ENCODE measurements at regions of chr12 and their contacts with region 1.

Region 1: DNA sequence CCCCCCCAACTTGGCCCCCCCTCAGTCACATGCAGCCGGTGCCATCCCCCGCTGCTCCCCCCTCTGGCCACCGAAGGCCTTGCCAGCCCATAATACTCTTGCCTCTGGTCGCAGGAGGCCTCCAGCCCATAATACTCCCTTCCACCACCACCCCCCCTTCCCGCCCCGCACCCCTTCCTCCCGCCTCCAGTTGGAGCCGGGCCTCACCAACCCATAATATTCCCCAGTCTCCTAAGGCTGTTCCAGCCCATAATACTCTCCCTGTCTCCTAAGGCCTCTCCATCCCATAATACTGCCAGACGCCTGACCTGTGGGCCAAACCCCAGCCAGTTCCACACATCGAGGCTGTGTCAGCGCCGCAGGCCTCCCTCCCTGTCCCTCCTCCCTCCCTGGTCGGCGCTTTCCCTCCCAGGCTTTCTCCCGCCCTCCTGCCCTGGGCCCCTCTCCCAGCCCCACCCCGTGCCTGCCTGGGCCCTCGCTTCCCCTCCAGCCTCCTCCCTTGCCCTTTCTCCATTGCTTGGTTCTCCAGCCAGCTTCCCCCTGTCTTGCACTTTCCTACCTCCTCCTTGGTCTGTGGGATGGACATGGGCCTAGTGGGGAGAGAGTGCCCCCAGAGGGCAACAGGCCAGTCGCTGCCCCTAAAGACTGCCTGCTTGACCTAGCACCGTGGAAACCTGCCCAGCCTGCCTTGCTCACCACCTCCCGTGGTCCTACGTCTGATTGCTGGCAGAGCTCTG is 6.8 kb upstream of the CHD4 start:
- H3K4me3 Mint-ChIP-seq: peak overlapping the region; percentile 62
- H3K27ac Mint-ChIP-seq: peak overlapping the region; percentile 85
- H3K4me1 Mint-ChIP-seq: peaks cover 66% of the 10 kb centered on the region
- H3K27me3 Mint-ChIP-seq: no peaks in the 10 kb centered on the region

Region 2: GRCh38 chr12:6647083-6647604 is 33.2 kb after region 1 on chr12 and contains the start of gene ACRBP:
- intact Hi-C with region 1: loop called (anchors 2 kb)
- H3K4me3 Mint-ChIP-seq: peak within 1 kb of the TSS; percentile 93
- H3K27ac Mint-ChIP-seq: peak within 1 kb of the TSS; percentile 98
- H3K4me1 Mint-ChIP-seq: peaks cover 52% of the 10 kb centered on the region
- H3K27me3 Mint-ChIP-seq: no peaks in the 10 kb centered on the region

Region 3: GRCh38 chr12:6667627-6668100 is 53.7 kb after region 1 on chr12:
- intact Hi-C with region 1: no loop called
- H3K4me3 Mint-ChIP-seq: no peak overlapping the region
- H3K27ac Mint-ChIP-seq: peak overlapping the region; percentile 58
- H3K4me1 Mint-ChIP-seq: peaks cover 8% of the 10 kb centered on the region
- H3K27me3 Mint-ChIP-seq: no peaks in the 10 kb centered on the region

Region 4: DNA sequence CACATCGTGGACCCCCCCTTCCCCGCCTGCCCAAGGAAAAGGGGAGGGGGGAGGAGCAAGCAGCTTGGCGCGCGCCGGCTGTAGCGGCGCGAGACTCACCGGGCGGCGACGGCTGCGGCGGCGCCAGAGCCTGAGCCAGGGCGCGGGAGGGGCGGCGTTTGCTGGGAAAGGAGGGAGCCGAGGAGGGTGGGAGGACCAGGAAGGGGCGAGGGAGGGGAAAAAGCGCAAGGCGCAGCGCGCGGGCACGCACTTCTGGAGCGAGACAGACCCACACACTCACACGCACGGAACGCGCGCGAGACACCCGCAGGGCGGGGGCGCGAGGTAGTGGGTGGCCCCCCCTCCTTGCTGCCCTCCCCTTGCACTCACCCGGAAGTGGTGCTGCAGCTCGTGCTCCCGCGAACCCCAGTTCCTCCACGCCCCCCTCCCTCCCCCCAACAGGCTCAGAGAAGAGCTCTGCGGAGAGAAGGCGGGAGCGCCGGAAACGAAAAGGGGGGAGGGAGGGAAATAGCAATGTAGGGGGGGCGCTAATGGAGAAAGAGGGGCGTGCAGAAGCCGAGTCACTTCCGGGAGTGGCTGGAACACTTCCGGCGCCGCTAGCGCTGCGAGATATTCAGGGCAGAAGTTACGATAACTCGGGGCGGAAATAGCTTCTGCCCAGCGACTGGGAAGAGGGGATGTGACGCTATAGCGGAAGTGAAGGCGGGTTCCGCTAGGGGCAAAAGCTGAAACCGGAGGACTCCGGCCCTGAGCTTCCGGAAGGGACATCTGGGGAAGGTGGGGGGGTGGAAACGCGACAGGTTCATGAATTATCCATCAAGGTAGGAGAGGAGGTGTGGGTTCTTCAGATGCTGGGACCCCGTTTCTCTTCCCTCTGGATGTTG is 75.3 kb after region 1 on chr12 and contains the start of gene ZNF384:
- intact Hi-C with region 1: loop called (anchors 1 kb)
- H3K4me3 Mint-ChIP-seq: peak within 1 kb of the TSS; percentile 97
- H3K27ac Mint-ChIP-seq: peak within 1 kb of the TSS; percentile 97
- H3K4me1 Mint-ChIP-seq: peaks cover 50% of the 10 kb centered on the region
- H3K27me3 Mint-ChIP-seq: peaks cover 10% of the 10 kb centered on the region

Region 5: DNA sequence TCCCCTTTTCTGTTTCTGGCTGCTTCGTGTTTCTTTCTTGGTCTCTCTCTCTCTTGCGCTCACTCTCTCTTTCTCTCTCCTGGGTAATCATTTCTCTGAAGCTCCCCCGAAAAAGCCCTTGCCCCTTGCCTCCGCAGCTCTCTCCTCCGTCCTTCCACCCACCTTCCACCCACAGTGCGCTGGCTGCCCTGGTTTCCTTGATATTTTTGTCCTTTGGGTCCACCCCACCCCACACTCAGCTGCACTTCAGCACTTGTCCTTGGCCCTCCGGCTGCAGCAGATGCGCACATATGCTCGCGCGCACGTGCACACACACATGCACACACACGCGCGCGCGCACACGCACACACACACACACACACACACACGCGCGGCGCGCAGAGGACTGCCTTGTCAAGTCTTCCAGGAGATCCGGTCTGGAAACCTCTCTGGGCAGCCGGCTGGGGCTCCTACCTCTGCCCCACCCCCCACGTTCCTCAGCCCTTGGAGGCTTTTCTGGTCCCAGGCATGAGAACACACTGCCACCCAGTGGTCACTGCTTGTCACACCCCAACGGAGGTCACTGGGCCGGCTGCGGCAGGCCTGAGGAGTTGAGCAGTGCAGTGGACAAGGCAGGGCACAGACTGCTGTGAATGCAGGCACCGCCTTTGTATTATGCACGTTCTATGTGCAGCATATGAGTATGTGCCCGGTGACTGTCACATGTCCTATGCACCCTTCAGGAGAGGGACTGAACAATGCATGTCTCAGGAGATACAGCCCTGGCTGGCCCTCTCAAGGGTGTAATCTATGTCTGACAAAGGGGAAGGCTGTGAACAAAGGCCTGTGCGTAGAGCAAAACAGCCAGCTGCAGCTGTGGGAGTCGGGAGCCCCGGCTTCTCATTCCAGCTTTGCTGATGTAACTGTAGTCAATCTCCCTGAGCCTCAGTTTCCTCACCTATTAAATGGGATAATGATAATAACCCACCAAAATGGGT is 164.9 kb after region 1 on chr12:
- intact Hi-C with region 1: loop called (anchors 5 kb)
- H3K4me3 Mint-ChIP-seq: peak overlapping the region; percentile 78
- H3K27ac Mint-ChIP-seq: peak overlapping the region; percentile 74
- H3K4me1 Mint-ChIP-seq: peaks cover 47% of the 10 kb centered on the region
- H3K27me3 Mint-ChIP-seq: peaks cover 49% of the 10 kb centered on the region

Measured in dendritic cell treated with granulocyte-macrophage colony-stimulating factor and Interleukin-4, amounts not matched to agents 40 ng/mL and 50 ng/mL, for 4 days (primary cell).